B cell (primary cell): ENCODE measurements at regions of chr1 and their contacts with region 1.

Region 1: GRCh38 chr1:109493805-109494539 is at the start of gene CYB561D1:
- DNase-seq: peak; percentile 94
- ATAC-seq: peak; percentile 89
- H3K4me3 ChIP-seq: peak within 1 kb of the TSS; percentile 48 to 97 (median 88)
- H3K4me3 Mint-ChIP-seq: peak within 1 kb of the TSS; percentile 97
- H3K27ac ChIP-seq: peak within 1 kb of the TSS; percentile 14 to 46
- H3K27ac Mint-ChIP-seq: peak within 1 kb of the TSS; percentile 93
- H3K4me1 ChIP-seq: peaks cover 16 to 33% of the 10 kb centered on the region in 2 donors
- H3K4me1 Mint-ChIP-seq: peaks cover 40% of the 10 kb centered on the region
- H3K27me3 ChIP-seq: no peaks in the 10 kb centered on the region
- H3K27me3 Mint-ChIP-seq: no peaks in the 10 kb centered on the region
- CTCF ChIP-seq: peak; percentile 91
- total RNA-seq, gene CYB561D1: 28.0 and 29.0 TPM in 2 replicates

Region 2: DNA sequence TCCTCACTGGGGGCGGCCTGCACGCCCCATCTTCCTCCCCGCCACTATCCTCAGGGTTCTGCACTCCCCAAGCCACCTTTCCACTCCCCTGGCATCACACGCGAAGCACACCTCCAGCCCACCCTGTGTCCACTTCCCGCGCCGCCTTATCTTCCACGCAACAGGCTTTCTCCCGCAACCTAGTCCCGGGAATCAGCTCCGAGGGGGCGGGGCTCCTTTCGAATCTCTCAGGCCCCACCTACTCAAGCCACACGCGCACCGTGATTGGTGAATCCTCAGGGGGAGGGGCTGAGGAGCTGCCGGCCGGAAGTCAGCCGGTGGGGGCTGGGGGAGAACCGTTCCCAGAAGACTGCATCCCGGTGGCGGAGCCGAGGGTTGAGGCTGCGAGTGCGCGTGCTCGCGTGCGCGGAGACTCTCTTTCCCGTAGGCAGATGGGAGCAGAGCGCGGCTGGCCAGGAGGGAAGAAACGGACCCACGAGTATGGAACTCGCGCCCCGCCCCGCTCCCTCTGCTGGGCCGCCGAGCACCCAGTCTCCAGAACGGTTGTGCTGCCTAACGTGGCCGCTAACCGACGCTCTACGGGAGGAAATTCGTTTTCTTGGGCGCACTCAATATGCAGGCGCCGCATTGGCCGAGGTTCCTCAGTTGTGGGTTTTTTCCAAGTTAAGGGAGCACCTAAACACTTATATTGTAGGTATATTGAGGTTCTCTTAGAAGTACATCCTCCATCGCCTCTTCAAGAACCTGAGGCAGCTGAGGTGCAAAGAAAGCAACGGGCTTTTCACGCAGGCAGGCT is 210.8 kb before region 1 on chr1 and contains the start of gene PSRC1:
- CTCF ChIA-PET with region 1: interaction called, 3 read pairs
- POLR2A ChIA-PET with region 1: no interaction called
- intact Hi-C with region 1: loop called (anchors 1 kb)
- DNase-seq: peak; percentile 94
- ATAC-seq: peak; percentile 99
- H3K4me3 ChIP-seq: peak within 1 kb of the TSS; percentile 68 to 93 (median 80)
- H3K4me3 Mint-ChIP-seq: peak within 1 kb of the TSS; percentile 97
- H3K27ac ChIP-seq: peak within 1 kb of the TSS in 1 of 2 donors; percentile 22
- H3K27ac Mint-ChIP-seq: peak within 1 kb of the TSS; percentile 88
- H3K4me1 ChIP-seq: peaks cover 12 to 19% of the 10 kb centered on the region in 2 donors
- H3K4me1 Mint-ChIP-seq: peaks cover 16% of the 10 kb centered on the region
- H3K27me3 ChIP-seq: no peaks in the 10 kb centered on the region
- H3K27me3 Mint-ChIP-seq: peaks cover 3% of the 10 kb centered on the region
- CTCF ChIP-seq: peak; percentile 71
- total RNA-seq, gene PSRC1: not detected in 2 replicates

Region 3: DNA sequence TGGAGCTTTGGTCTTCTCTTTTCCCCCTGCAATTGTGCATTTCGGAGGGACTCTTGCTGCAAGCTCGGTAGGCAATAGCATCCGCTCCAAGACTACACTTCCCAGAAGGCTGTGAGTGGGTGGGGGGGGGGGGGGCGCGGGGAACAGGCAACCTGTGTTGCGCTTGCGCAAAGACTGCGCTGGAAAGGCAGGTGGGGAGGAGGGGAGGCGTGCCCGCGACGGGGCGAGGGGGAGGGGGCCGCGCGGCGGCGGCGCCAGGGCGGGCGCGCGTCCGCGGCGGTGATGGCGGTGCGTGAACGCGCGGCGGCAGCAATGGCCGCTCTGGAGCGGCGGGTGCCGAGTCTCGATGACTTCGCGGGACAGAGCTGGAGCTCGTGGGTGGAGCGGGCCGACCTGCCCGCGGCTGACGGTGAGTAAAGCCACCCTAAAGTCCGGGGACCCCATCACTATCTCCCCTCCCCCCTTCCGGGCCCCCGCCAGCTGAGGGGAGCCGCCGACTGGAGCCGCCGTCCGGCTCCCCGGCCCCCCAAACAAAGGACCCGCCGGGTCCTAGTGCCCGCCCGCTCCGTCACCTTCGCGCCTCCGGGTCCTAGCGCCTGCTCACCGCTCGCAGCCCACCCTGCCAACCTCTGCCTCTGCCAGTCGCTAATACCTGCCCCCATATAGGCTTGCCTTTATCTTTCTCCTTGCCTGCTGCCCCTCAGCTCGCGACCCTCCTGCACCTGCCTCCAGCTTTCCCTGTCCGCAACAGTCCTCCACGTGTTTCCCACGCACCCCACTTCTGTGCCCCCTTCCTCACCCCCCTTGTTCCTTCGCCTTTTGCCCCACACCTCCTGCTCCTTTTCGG is 10.1 kb before region 1 on chr1 and contains the start of gene ATXN7L2:
- CTCF ChIA-PET with region 1: interaction called, 46 read pairs
- POLR2A ChIA-PET with region 1: interaction called, 8 read pairs
- intact Hi-C with region 1: loop called (anchors 1 kb)
- DNase-seq: peak; percentile 96
- ATAC-seq: peak; percentile 77
- H3K4me3 ChIP-seq: peak within 1 kb of the TSS; percentile 51 to 82 (median 74)
- H3K4me3 Mint-ChIP-seq: peak within 1 kb of the TSS; percentile 96
- H3K27ac ChIP-seq: peak within 1 kb of the TSS; percentile 92 to 95
- H3K27ac Mint-ChIP-seq: peak within 1 kb of the TSS; percentile 88
- H3K4me1 ChIP-seq: peaks cover 12 to 23% of the 10 kb centered on the region in 2 donors
- H3K4me1 Mint-ChIP-seq: peaks cover 28% of the 10 kb centered on the region
- H3K27me3 ChIP-seq: peaks cover 0 to 15% (median 5%) of the 10 kb centered on the region in 4 experiments
- H3K27me3 Mint-ChIP-seq: peaks cover 20% of the 10 kb centered on the region
- CTCF ChIP-seq: no peak
- total RNA-seq, gene ATXN7L2: 10.1 and 10.9 TPM in 2 replicates

Region 4: GRCh38 chr1:109509176-109510134 is 15.5 kb after region 1 on chr1 and contains the start of gene AMIGO1:
- CTCF ChIA-PET with region 1: interaction called, 61 read pairs
- POLR2A ChIA-PET with region 1: no interaction called
- intact Hi-C with region 1: loop called (anchors 1 kb)
- DNase-seq: peak; percentile 81
- ATAC-seq: peak; percentile 84
- H3K4me3 ChIP-seq: peak within 1 kb of the TSS; percentile 49 to 64 (median 62)
- H3K4me3 Mint-ChIP-seq: peak within 1 kb of the TSS; percentile 92
- H3K27ac ChIP-seq: no peak within 1 kb of the TSS
- H3K27ac Mint-ChIP-seq: peak within 1 kb of the TSS; percentile 37
- H3K4me1 ChIP-seq: peaks cover 11 to 15% of the 10 kb centered on the region in 2 donors
- H3K4me1 Mint-ChIP-seq: peaks cover 18% of the 10 kb centered on the region
- H3K27me3 ChIP-seq: peaks cover 0 to 9% (median 5%) of the 10 kb centered on the region in 4 experiments
- H3K27me3 Mint-ChIP-seq: peaks cover 37% of the 10 kb centered on the region
- CTCF ChIP-seq: no peak
- total RNA-seq, gene AMIGO1: 2.4 and 2.6 TPM in 2 replicates

Region 5: DNA sequence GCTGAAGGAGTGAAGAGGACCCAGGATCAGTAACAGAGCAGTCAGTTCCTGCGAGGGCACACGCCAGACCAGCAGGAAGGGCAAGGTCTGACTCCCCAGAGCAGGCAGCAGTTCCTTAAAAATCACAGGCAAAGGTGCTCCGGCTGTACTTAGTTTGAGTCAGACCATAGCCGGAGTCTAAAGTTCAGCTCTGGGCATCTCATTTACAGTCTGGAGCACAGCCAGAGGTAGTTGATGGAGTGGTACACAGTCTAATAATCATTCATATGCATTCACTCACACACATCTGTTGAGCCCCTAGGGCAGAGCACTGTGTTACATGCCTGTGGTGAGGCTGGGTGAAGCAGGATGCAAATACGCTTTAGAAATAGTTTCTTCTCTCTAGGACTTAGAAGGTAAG is 22.9 kb after region 1 on chr1:
- CTCF ChIA-PET with region 1: interaction called, 926 read pairs
- POLR2A ChIA-PET with region 1: no interaction called
- intact Hi-C with region 1: no loop called
- DNase-seq: no peak
- ATAC-seq: no peak
- H3K4me3 ChIP-seq: no peak overlapping the region
- H3K4me3 Mint-ChIP-seq: no peak overlapping the region
- H3K27ac ChIP-seq: no peak overlapping the region
- H3K27ac Mint-ChIP-seq: no peak overlapping the region
- H3K4me1 ChIP-seq: no peaks in the 10 kb centered on the region
- H3K4me1 Mint-ChIP-seq: no peaks in the 10 kb centered on the region
- H3K27me3 ChIP-seq: peaks cover 0 to 5% (median 0%) of the 10 kb centered on the region in 4 experiments
- H3K27me3 Mint-ChIP-seq: peaks cover 22% of the 10 kb centered on the region
- CTCF ChIP-seq: no peak

Region 6: DNA sequence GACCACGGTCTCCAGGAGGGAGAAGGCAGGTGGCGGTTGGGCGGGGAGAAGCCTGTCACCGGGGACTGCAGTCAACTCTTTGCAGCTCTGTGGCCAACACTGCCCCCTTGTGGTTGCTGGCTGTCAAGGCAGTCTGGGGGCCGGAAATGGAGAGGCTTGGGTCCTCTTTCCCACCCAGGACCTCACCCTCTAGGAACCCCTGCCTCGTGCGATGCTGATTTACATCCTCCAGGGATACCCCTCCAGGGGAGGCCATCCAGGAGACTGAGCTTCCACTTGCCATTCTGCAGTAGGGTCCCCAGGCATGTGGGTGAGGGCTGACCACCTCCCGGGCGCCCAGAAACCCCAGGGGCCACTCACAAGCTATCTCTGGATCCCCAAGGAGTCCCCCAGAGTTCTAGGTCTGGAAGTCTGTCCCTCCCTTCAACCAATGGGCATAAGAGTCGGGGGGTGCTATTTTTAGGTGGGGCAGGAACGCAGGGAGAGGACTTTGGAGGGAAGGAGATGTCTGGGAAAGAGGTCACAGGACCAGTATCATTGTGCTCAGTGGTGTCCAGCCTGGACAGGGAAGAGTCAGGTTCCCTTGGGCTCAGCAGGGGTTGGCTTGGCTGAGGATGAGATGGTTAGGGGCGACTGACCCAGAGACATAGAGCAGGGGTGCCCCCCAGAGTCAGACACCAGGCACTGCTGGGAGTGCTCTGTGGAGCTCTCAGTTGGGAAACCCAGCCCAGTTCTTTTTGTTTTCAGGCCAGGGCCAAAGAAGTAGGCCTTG is 38.6 kb after region 1 on chr1:
- CTCF ChIA-PET with region 1: interaction called, 926 read pairs
- POLR2A ChIA-PET with region 1: interaction called, 19 read pairs
- intact Hi-C with region 1: loop called (anchors 1 kb)
- DNase-seq: peak; percentile 88
- ATAC-seq: peak; percentile 90
- H3K4me3 ChIP-seq: peak overlapping the region in 4 of 5 experiments; percentile 37 to 67 (median 52)
- H3K4me3 Mint-ChIP-seq: peak overlapping the region; percentile 90
- H3K27ac ChIP-seq: peak overlapping the region in 1 of 2 donors; percentile 21
- H3K27ac Mint-ChIP-seq: peak overlapping the region; percentile 87
- H3K4me1 ChIP-seq: peaks cover 4 to 11% of the 10 kb centered on the region in 2 donors
- H3K4me1 Mint-ChIP-seq: peaks cover 11% of the 10 kb centered on the region
- H3K27me3 ChIP-seq: no peaks in the 10 kb centered on the region
- H3K27me3 Mint-ChIP-seq: no peaks in the 10 kb centered on the region
- CTCF ChIP-seq: peak; percentile 93

Region 7: GRCh38 chr1:109620841-109621286 is 126.9 kb after region 1 on chr1:
- CTCF ChIA-PET with region 1: interaction called, 3 read pairs
- POLR2A ChIA-PET with region 1: no interaction called
- intact Hi-C with region 1: loop called (anchors 5 kb)
- DNase-seq: peak; percentile 86
- ATAC-seq: peak; percentile 59
- H3K4me3 ChIP-seq: peak overlapping the region; percentile 65 to 94 (median 84)
- H3K4me3 Mint-ChIP-seq: peak overlapping the region; percentile 99
- H3K27ac ChIP-seq: peak overlapping the region; percentile 64 to 90
- H3K27ac Mint-ChIP-seq: peak overlapping the region; percentile 96
- H3K4me1 ChIP-seq: peaks cover 50 to 65% of the 10 kb centered on the region in 2 donors
- H3K4me1 Mint-ChIP-seq: peaks cover 72% of the 10 kb centered on the region
- H3K27me3 ChIP-seq: no peaks in the 10 kb centered on the region
- H3K27me3 Mint-ChIP-seq: no peaks in the 10 kb centered on the region
- CTCF ChIP-seq: no peak